Heart right ventricle (tissue), 16 donors: ENCODE measurements at regions of chr1 and their contacts with region 1.

Region 1: GRCh38 chr1:224519874-224520273 is 85.3 kb upstream of the WDR26 start:
- DNase-seq: no peak
- ATAC-seq: no peak
- H3K4me3 ChIP-seq: no peak overlapping the region
- H3K27ac ChIP-seq: no peak overlapping the region
- H3K4me1 ChIP-seq: no peaks in the 10 kb centered on the region
- H3K27me3 ChIP-seq: no peaks in the 10 kb centered on the region
- CTCF ChIP-seq: no peak

Region 2: GRCh38 chr1:224656392-224656791 is 136.5 kb after region 1 on chr1:
- intact Hi-C with region 1: no loop called
- DNase-seq: no peak
- ATAC-seq: no peak
- H3K4me3 ChIP-seq: no peak overlapping the region
- H3K27ac ChIP-seq: no peak overlapping the region
- H3K4me1 ChIP-seq: peaks cover 0 to 5% (median 0%) of the 10 kb centered on the region in 9 donors
- H3K27me3 ChIP-seq: no peaks in the 10 kb centered on the region
- CTCF ChIP-seq: no peak

Region 3: DNA sequence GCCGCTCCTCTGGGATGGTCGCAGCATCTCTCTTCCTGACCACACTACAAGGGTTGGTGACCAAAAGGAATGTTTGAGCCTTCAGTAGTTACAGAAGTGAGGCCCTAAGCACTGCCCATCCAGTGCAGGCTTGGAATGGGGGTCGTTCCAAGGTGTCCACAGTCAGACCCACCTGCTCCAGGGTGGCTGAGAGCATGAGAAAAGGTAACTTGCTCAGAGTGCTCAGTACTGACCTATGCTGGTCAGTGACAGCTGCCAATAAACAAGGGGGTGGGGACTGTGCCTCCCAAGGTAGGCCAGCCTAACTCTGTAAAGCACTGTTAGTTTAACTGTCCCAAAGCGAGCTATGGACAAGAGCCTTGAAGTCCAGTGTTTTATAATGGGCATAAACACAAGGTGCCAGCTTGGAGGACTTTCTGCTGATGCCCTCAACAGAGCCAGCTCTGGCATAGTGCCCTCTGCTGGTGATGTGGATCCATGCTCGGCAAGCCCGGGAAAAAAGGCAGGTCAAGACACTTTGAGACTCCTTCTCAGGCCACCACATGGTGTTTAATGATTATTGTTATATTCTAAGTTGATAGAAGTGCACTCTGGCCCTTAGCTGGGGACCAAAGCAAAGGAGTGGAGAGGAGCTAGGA is 331.5 kb after region 1 on chr1:
- intact Hi-C with region 1: loop called in 3 of 10 experiments (anchors 2 to 5 kb)
- DNase-seq: peak; percentile 18 to 44
- ATAC-seq: peak in 6 of 8 donors; percentile 7 to 53 (median 40)
- H3K4me3 ChIP-seq: no peak overlapping the region
- H3K27ac ChIP-seq: no peak overlapping the region
- H3K4me1 ChIP-seq: no peaks in the 10 kb centered on the region
- H3K27me3 ChIP-seq: peaks cover 0 to 7% (median 0%) of the 10 kb centered on the region in 7 donors
- CTCF ChIP-seq: peak; percentile 16 to 76 (median 54)

Region 4: GRCh38 chr1:224859651-224860050 is 339.8 kb after region 1 on chr1:
- intact Hi-C with region 1: loop called in 2 of 10 experiments (anchors 2 to 5 kb)
- DNase-seq: no peak
- ATAC-seq: no peak
- H3K4me3 ChIP-seq: no peak overlapping the region
- H3K27ac ChIP-seq: no peak overlapping the region
- H3K4me1 ChIP-seq: no peaks in the 10 kb centered on the region
- H3K27me3 ChIP-seq: peaks cover 0 to 22% (median 0%) of the 10 kb centered on the region in 7 donors
- CTCF ChIP-seq: no peak

Region 5: GRCh38 chr1:224922404-224923164 is 402.7 kb after region 1 on chr1:
- intact Hi-C with region 1: loop called in 3 of 10 experiments (anchors 5 kb)
- DNase-seq: no peak
- ATAC-seq: peak in 6 of 8 donors; percentile 24 to 65 (median 64)
- H3K4me3 ChIP-seq: no peak overlapping the region
- H3K27ac ChIP-seq: no peak overlapping the region
- H3K4me1 ChIP-seq: no peaks in the 10 kb centered on the region
- H3K27me3 ChIP-seq: peaks cover 0 to 3% (median 0%) of the 10 kb centered on the region in 7 donors
- CTCF ChIP-seq: peak; percentile 57 to 76 (median 69)